Prostate gland (tissue), 2 donors: ENCODE measurements at regions of chr1 and their contacts with region 1.

Region 1: GRCh38 chr1:230917284-230918135 is 49.2 kb upstream of the C1orf198 start:
- DNase-seq: peak; percentile 53
- H3K4me3 ChIP-seq: no peak overlapping the region
- H3K27ac ChIP-seq: no peak overlapping the region
- H3K4me1 ChIP-seq: no peaks in the 10 kb centered on the region
- H3K27me3 ChIP-seq: no peaks in the 10 kb centered on the region
- CTCF ChIP-seq: peak; percentile 4 to 64 (median 55)
- POLR2A ChIP-seq: no peak

Region 2: DNA sequence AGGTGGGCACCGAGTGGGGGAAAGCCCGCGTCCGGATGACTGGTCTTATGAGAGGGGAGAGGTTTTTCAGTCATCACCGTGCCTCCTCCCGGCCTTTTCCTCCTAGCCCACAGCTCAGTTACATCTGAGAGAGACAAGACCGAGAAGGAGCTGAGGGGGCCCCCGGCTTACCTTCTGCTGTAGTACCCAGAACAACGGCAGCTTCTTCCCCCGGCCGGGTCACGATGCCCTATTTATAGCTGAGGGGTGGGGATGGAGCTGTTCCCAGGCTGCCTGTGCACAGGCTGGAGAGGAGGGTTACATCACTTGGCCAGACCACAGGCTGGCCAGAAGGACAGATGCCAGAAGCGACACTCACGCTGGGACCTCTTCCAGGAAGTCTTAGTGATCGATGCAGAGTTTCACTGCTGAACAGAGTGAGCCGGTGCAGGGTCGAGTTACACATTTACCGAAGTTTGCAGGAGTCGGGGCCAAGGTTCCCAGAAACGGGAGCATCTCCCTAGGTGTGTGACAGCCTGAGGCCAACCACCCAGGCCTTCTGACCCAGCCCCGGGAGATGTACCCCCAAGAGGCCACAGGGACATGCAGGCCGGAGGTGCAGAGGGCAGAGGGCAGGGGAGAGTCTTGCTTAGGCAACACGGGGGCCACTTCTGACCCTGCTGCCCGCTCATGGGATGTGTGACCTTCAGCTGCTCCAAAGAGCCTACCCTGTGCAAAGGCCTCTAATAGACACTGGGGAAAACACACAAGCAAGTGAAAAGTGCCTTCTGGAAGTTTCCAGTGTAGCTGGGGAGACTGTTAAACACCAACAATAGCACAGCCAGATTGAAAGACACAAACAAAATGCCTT is 203.4 kb before region 1 on chr1 and contains the start of gene AGT:
- intact Hi-C with region 1: no loop called
- DNase-seq: peak; percentile 71
- H3K4me3 ChIP-seq: no peak within 1 kb of the TSS
- H3K27ac ChIP-seq: peak within 1 kb of the TSS in 1 of 2 donors; percentile 2
- H3K4me1 ChIP-seq: no peaks in the 10 kb centered on the region
- H3K27me3 ChIP-seq: no peaks in the 10 kb centered on the region
- CTCF ChIP-seq: no peak
- POLR2A ChIP-seq: no peak
- total RNA-seq, gene AGT: 4.7 to 12.0 TPM

Region 3: GRCh38 chr1:230797942-230798418 is 119.5 kb before region 1 on chr1:
- intact Hi-C with region 1: loop called (anchors 5 kb)
- DNase-seq: peak; percentile 54
- H3K4me3 ChIP-seq: no peak overlapping the region
- H3K27ac ChIP-seq: no peak overlapping the region
- H3K4me1 ChIP-seq: no peaks in the 10 kb centered on the region
- H3K27me3 ChIP-seq: no peaks in the 10 kb centered on the region
- CTCF ChIP-seq: peak; percentile 45 to 83 (median 74)
- POLR2A ChIP-seq: no peak

Region 4: DNA sequence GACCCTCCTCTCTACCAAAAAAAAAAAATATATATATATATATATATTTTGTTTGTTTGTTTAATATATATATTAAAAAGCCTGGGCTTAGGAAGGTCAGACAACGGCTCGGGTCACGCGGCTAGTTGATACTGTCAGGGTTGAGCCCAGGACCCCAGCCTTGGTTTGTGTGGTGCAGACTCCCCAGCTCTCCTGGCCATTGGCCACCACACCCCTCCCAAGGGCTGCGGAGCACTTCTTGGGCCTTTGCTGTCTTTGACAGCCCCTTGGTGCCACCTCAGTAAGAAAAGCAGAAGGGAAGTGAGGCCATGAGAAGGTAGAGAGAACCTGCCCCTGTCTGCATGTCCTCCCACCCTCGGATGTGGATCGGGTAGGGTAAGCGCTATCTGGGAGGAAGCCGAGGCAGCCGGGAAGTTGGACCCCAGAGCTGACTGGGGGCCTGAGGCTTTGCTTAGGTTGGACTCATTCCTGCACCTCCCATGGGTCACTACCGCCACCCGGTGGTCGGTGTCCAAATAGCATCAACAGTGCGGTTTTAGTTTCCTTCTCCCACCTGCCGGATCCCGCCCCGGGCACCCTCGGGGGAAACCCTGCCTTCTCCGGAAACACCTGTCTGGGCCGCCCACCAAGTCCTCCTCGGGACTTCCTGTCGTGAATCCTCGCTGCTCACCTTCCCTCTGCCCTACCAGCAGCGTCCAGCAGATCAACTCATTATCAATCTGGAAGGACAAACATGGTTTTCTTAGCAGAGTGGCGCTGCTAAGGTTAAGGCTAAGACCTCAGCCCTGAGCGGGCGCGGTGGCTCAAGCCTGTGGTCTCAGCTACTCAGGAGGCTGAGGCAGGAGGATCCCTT is 293.7 kb after region 1 on chr1:
- intact Hi-C with region 1: loop called (anchors 5 kb)
- DNase-seq: peak; percentile 63
- H3K4me3 ChIP-seq: peak overlapping the region; percentile 24 to 25
- H3K27ac ChIP-seq: no peak overlapping the region
- H3K4me1 ChIP-seq: no peaks in the 10 kb centered on the region
- H3K27me3 ChIP-seq: no peaks in the 10 kb centered on the region
- CTCF ChIP-seq: peak; percentile 71 to 87 (median 82)
- POLR2A ChIP-seq: no peak